GM23248 (cell line): ENCODE measurements at regions of chr12 and their contacts with region 1.

Region 1: GRCh38 chr12:86914716-86915115 is 658.5 kb upstream of the MGAT4C start:
- DNase-seq: peak; percentile 53
- H3K4me3 ChIP-seq: no peak overlapping the region
- H3K27ac ChIP-seq: no peak overlapping the region
- H3K4me1 ChIP-seq: no peaks in the 10 kb centered on the region
- H3K27me3 ChIP-seq: no peaks in the 10 kb centered on the region

Region 2: DNA sequence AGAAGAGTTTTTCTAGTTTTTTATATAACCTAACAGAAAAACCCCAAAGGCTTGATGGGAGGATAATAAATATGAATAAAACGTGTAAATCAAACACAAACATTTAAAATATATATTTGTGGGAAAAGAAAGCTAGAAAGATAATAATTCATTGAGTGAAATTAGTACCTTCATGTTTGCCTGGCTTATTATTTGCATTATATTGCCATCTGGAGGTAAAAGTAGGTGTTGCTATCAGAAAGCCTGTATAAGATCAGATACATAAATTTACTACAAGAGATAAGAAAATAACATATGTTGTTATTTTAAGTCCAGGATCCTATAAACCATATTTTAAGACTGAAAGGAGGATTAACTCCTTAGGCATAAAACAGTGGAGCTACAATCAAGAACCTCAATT is 962.9 kb before region 1 on chr12:
- in situ Hi-C with region 1: loop called (anchors 25 kb)
- DNase-seq: peak; percentile 18
- H3K4me3 ChIP-seq: no peak overlapping the region
- H3K27ac ChIP-seq: no peak overlapping the region
- H3K4me1 ChIP-seq: no peaks in the 10 kb centered on the region
- H3K27me3 ChIP-seq: no peaks in the 10 kb centered on the region

Region 3: GRCh38 chr12:86801439-86801838 is 113.3 kb before region 1 on chr12:
- in situ Hi-C with region 1: no loop called
- DNase-seq: no peak
- H3K4me3 ChIP-seq: no peak overlapping the region
- H3K27ac ChIP-seq: no peak overlapping the region
- H3K4me1 ChIP-seq: no peaks in the 10 kb centered on the region
- H3K27me3 ChIP-seq: no peaks in the 10 kb centered on the region

Region 4: DNA sequence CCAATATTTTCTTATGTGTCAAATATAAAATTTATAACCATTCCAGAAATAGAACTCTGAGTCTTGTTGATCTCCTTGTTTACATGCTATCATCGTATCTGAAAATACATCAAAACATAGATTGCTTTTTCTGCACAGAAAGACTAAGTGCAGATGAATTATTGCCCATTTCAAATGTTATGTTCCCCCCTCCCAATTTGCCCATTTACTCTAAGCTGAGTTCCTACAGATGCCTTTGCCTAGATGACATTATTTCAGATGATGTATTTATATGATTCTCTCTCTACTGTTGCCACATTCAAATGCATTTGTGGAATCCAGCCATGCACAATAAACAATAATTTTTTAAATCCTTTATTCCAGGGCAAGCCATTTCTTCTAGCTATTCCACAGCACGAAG is 151.6 kb after region 1 on chr12:
- in situ Hi-C with region 1: no loop called
- DNase-seq: no peak
- H3K4me3 ChIP-seq: no peak overlapping the region
- H3K27ac ChIP-seq: no peak overlapping the region
- H3K4me1 ChIP-seq: no peaks in the 10 kb centered on the region
- H3K27me3 ChIP-seq: no peaks in the 10 kb centered on the region